GM13976 (cell line): ENCODE measurements at regions of chr10 and their contacts with region 1.

Region 1: GRCh38 chr10:123402656-123403055 is 248.5 kb downstream of the BUB3 start:
- DNase-seq: peak; percentile 77
- CTCF ChIP-seq: no peak

Region 2: DNA sequence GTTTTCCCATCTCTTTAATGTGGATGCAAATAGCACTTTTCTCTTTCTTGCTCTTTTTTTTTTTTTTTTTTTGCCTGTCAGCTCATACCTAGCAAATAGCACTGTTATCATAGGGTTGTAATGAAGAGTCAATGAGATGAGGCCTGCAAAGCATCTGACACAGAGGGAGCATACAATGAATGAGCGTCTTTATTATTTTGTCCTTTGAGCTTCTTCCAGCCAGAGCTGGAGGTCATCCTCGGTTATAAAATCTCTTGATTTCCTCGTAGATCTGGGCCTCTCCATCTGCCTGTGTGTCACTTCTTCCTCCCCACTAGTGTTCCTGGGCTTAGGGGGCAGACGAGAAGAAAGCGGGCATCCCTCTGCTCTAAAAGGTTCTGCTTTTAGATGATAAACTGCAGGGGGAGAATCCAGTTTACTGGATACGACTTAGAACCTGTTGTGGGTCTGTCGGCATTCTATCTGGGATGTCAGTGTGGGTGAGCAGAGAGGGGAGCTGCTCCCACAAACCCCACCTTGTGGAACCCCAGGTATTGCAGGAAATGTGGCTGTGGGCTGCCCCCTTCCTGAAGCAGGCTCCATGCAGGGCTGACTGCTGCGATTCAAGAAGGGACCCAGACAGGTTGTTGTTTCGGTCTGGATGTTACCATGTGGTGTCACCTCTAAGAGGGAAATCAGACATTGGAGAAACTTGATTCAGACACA is 127.7 kb after region 1 on chr10:
- in situ Hi-C with region 1: loop called (anchors 10 kb)
- DNase-seq: peak; percentile 2
- CTCF ChIP-seq: no peak